Activated naive CD4-positive, alpha-beta T cell treated with anti-CD3 and anti-CD28 coated beads for 36 hours (primary cell): ENCODE measurements at regions of chr1 and their contacts with region 1.

Region 1: GRCh38 chr1:117534995-117535467 is 70.8 kb upstream of the TENT5C start:
- DNase-seq: peak; percentile 50
- H3K4me3 Mint-ChIP-seq: no peak overlapping the region
- H3K27ac Mint-ChIP-seq: no peak overlapping the region
- H3K4me1 Mint-ChIP-seq: peaks cover 23% of the 10 kb centered on the region
- H3K27me3 Mint-ChIP-seq: no peaks in the 10 kb centered on the region

Region 2: GRCh38 chr1:116909510-116910378 is 625.3 kb before region 1 on chr1 and contains the start of gene PTGFRN:
- CTCF ChIA-PET with region 1: no interaction called
- intact Hi-C with region 1: loop called (anchors 10 kb)
- DNase-seq: peak; percentile 53
- H3K4me3 Mint-ChIP-seq: peak within 1 kb of the TSS; percentile 75
- H3K27ac Mint-ChIP-seq: peak within 1 kb of the TSS; percentile 30
- H3K4me1 Mint-ChIP-seq: peaks cover 3% of the 10 kb centered on the region
- H3K27me3 Mint-ChIP-seq: no peaks in the 10 kb centered on the region
- total RNA-seq, gene PTGFRN: 24.0 to 28.0 TPM

Region 3: DNA sequence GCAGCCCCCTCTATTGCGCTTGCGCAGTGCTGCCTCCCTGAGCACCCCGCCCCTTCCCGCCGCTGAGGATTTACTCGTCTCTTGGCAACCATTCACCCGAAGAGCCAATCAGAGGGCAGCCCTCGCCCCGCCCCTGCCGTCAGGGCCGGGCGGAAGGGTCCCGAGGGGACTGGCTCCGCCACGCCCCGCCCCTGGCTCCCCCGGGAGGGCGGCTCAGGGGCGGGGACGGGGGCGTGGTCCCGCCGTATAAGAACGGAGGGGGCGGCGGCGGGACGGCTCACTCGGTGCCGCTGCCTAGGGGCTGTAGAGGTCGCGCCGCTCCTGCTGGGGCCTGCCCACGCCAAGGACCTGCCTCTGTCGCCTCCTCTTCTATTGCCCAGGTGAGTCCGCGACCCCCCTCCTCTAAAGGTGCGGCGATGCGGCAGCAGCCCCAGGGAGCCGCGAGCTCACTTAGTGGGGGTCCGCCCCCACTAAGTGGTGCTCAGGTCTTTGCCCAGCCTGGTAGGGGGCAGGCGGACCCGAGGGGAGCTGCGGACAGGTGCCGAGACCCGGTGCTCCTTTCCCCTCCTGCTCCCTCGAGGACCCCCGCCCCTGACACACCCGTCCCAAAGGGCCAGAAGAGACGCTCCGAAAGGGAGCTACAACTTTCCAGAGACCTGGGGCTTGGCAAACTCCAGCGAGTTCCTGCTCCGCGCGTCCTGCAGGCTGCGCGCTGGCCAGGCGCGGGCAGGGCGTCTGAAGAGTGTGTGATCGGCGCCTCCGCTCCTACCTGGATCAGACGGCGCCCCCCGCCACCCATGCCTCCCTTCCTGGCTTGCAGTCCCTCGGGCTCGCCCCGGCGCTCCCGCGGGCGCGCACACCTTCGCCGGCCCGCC is 71.0 kb after region 1 on chr1 and contains the start of gene TENT5C:
- CTCF ChIA-PET with region 1: interaction called, 16 read pairs
- intact Hi-C with region 1: loop called (anchors 1 kb)
- DNase-seq: peak; percentile 98
- H3K4me3 Mint-ChIP-seq: peak within 1 kb of the TSS; percentile 86
- H3K27ac Mint-ChIP-seq: peak within 1 kb of the TSS; percentile 78
- H3K4me1 Mint-ChIP-seq: peaks cover 22% of the 10 kb centered on the region
- H3K27me3 Mint-ChIP-seq: peaks cover 2% of the 10 kb centered on the region
- total RNA-seq, gene TENT5C: 10.7 to 11.2 TPM

Region 4: GRCh38 chr1:117683571-117684285 is 148.7 kb after region 1 on chr1:
- CTCF ChIA-PET with region 1: interaction called, 10 read pairs
- intact Hi-C with region 1: no loop called
- DNase-seq: no peak
- H3K4me3 Mint-ChIP-seq: no peak overlapping the region
- H3K27ac Mint-ChIP-seq: no peak overlapping the region
- H3K4me1 Mint-ChIP-seq: no peaks in the 10 kb centered on the region
- H3K27me3 Mint-ChIP-seq: peaks cover 5% of the 10 kb centered on the region

Region 5: GRCh38 chr1:117783606-117784396 is 248.8 kb after region 1 on chr1:
- CTCF ChIA-PET with region 1: no interaction called
- intact Hi-C with region 1: no loop called
- DNase-seq: no peak
- H3K4me3 Mint-ChIP-seq: no peak overlapping the region
- H3K27ac Mint-ChIP-seq: no peak overlapping the region
- H3K4me1 Mint-ChIP-seq: peaks cover 3% of the 10 kb centered on the region
- H3K27me3 Mint-ChIP-seq: peaks cover 5% of the 10 kb centered on the region

Region 6: GRCh38 chr1:117895482-117896114 is 360.6 kb after region 1 on chr1:
- CTCF ChIA-PET with region 1: interaction called, 15 read pairs
- intact Hi-C with region 1: loop called (anchors 1 kb)
- DNase-seq: peak; percentile 80
- H3K4me3 Mint-ChIP-seq: no peak overlapping the region
- H3K27ac Mint-ChIP-seq: no peak overlapping the region
- H3K4me1 Mint-ChIP-seq: no peaks in the 10 kb centered on the region
- H3K27me3 Mint-ChIP-seq: no peaks in the 10 kb centered on the region

Region 7: DNA sequence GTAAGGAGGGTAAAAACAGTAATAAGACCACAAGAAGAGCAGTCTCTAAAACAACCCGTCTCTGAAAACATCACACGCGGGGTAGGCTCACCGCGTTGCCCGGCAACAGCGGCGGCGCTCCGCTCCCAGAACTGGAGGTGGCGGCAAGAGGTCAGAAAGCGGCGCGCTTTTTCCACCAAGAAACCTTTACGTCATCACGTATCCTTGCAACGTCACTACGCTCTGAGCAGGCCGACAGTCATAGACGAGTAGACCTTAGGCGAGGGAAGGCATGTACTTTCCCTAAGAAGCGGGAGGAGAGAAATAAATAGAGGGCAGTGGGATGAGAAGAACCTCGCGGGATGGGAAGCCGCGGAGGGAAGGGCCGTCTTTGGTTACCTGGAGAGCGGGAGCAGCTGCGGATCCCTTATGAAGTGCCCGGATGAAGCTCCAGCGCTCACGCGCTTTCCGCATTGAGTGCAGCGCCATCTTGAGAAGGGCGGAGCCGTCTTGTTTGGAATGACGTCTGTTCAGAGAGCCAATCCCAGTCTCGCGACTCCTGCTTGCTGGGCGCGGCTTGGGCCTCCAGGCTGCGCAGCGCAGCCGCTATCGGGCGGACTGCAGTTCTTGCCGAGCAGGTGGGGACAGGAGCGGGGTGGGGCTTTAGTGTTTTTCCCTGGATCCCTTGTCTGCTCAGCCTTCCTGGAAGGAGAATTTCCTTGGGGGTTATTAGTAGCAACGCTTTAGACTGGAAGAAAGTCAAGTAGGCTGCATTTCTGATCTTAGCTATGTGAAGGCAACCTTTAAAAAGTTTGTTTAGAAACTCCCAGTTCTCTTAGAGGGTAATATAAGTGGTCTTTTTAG is 1605.4 kb after region 1 on chr1 and contains the start of gene WARS2:
- CTCF ChIA-PET with region 1: no interaction called
- intact Hi-C with region 1: loop called (anchors 1 kb)
- DNase-seq: peak; percentile 95
- H3K4me3 Mint-ChIP-seq: no peak within 1 kb of the TSS
- H3K27ac Mint-ChIP-seq: no peak within 1 kb of the TSS
- H3K4me1 Mint-ChIP-seq: peaks cover 27% of the 10 kb centered on the region
- H3K27me3 Mint-ChIP-seq: no peaks in the 10 kb centered on the region
- total RNA-seq, gene WARS2: 28.3 to 30.0 TPM